ENCODE measurements at regions of chr20 and their contacts with region 1.

Region 1: DNA sequence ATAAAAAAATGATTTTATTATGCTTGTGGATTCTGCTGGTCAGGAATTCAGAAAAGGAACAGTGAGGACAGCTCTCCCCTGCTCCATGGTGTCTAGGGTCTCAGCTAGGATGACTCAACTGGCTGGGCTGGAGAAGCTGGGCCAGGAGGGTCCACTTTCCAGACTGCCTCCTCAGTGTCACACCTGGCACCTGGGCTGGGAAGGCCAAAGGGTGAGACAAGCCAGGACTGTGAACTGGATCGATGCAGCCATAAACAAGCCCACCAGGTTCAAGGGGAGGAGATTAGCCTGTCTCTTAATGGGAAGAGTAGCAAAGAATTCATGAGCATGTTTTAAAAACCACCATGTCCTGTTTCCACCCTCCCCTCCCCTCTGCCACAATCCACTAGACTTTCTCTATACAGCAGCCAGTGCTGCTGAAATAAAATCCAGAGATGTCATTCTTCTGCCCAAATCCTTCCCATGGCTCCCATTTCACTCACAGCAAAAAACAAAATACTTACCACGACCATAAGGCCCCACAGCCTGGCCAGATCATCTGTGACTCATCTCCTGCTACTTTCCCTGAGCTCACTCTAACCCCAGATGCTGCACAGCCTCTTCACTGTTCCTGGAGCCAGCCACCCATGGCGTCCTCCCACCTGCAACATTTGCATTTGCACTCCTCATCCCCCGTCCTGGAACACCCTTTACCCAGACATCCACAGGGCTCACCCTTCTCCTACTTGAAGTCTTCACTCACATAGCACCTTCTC is 13.8 kb downstream of the SPTLC3 start:
- DNase-seq: peak; percentile 91
- ATAC-seq: peak; percentile 66
- H3K4me3 ChIP-seq: peak overlapping the region; percentile 3; the same call in 1 of the 2 replicates
- H3K27ac ChIP-seq: peak overlapping the region; percentile 92
- H3K4me1 ChIP-seq: peaks cover 43% of the 10 kb centered on the region
- H3K27me3 ChIP-seq: no peaks in the 10 kb centered on the region
- CTCF ChIP-seq: no peak

Region 2: DNA sequence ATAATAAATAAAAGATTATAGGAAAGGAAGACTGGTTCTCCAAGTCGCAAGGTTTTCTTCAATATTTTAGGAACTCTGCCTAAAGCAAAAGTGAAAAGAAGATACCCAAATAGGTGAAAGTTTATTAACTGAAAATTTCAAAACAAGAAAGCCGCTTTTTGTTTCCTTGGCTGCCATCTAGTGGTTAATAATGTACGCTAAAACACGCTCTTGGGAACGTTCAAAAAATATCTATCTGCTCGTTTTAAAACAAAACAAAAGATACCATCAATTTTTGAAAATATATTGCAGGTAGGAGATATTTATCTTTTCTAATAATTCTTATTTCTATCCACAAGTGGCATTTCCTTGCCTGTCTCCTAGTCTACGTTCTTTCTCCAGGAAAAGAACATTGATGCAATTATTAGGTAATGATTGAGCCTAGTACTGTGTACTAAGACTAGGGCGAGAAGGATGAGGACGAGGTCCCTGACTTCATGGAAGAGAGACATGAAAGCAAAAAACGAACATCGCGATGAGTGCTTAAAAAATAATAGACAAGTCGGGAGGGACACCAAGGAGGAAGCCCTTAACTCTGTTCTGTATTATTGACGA is 83.4 kb after region 1 on chr20:
- CTCF ChIA-PET with region 1: no interaction called
- POLR2A ChIA-PET with region 1: no interaction called
- intact Hi-C with region 1: loop called (anchors 5 kb)
- DNase-seq: peak; percentile 84
- ATAC-seq: peak; percentile 23; the same call in 1 of the 2 replicates
- H3K4me3 ChIP-seq: no peak overlapping the region
- H3K27ac ChIP-seq: no peak overlapping the region
- H3K4me1 ChIP-seq: peaks cover 17% of the 10 kb centered on the region
- H3K27me3 ChIP-seq: no peaks in the 10 kb centered on the region
- CTCF ChIP-seq: peak; percentile 89

Region 3: DNA sequence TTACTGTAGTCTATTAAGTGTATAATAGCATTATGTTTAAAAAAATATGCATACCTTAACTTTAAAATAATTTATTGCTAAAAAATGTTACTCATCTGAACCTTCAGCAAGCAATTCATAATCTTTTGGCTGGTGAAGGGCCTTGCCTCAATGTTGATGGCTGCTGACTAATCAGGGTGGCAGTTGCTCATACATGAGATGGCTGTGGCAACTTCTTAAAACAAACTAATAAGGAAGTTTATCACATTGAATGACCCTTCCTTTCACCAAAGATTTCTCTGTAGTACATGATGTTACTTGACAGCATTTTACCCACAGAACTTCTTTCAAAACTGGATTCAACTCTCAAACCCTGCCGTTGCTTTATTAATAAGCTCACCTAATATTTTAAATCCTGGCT is 532.1 kb after region 1 on chr20:
- CTCF ChIA-PET with region 1: no interaction called
- POLR2A ChIA-PET with region 1: no interaction called
- intact Hi-C with region 1: loop called (anchors 1 kb)
- DNase-seq: peak; percentile 91
- ATAC-seq: peak; percentile 84
- H3K4me3 ChIP-seq: no peak overlapping the region
- H3K27ac ChIP-seq: peak overlapping the region; percentile 77
- H3K4me1 ChIP-seq: peaks cover 42% of the 10 kb centered on the region
- H3K27me3 ChIP-seq: no peaks in the 10 kb centered on the region
- CTCF ChIP-seq: no peak

Measured in PC-3 (cell line).